Naive thymus-derived CD4-positive, alpha-beta T cell (primary cell): ENCODE measurements at regions of chr2 and their contacts with region 1.

Region 1: DNA sequence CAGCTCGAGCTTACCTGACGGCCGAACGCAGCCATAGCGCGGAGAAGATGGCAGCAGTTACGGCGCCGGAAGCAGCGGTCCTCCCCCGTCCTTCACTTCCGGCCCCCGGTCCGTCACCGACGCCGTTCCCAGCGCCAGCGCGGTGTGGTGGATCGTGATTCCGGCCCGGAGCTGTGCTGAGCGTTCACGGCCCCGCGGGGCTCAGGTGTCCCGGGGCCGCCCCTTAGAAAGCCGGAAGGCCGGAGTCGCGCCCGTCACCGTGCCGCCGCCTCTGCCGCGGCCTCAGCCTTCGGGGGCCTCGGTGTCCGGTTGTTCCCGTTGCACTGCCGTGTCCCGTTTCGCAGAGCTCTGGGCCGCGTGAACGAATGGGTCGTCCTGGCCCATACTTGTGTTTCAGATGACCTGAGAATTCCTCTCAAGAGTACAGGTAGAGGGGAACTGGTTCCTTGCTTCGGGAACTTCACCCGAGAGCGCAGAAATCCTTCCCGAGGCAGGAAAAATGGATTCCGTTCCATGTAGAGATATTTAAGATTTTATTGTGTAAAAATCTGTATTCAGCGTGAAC is at the start of gene MTERF4:
- DNase-seq: peak; percentile 80 to 91 (median 86)
- ATAC-seq: peak; percentile 98
- H3K4me3 ChIP-seq: peak within 1 kb of the TSS; percentile 89
- H3K4me3 Mint-ChIP-seq: peak within 1 kb of the TSS; percentile 86 to 99 (median 96)
- H3K27ac ChIP-seq: peak within 1 kb of the TSS; percentile 92
- H3K27ac Mint-ChIP-seq: peak within 1 kb of the TSS; percentile 96 to 99 (median 99)
- H3K4me1 ChIP-seq: peaks cover 29 to 55% of the 10 kb centered on the region in 2 donors
- H3K4me1 Mint-ChIP-seq: peaks cover 27 to 84% (median 64%) of the 10 kb centered on the region in 7 donors
- H3K27me3 ChIP-seq: no peaks in the 10 kb centered on the region
- H3K27me3 Mint-ChIP-seq: no peaks in the 10 kb centered on the region
- total RNA-seq, gene MTERF4: 45.3 to 214 (median 91.8) TPM

Region 2: DNA sequence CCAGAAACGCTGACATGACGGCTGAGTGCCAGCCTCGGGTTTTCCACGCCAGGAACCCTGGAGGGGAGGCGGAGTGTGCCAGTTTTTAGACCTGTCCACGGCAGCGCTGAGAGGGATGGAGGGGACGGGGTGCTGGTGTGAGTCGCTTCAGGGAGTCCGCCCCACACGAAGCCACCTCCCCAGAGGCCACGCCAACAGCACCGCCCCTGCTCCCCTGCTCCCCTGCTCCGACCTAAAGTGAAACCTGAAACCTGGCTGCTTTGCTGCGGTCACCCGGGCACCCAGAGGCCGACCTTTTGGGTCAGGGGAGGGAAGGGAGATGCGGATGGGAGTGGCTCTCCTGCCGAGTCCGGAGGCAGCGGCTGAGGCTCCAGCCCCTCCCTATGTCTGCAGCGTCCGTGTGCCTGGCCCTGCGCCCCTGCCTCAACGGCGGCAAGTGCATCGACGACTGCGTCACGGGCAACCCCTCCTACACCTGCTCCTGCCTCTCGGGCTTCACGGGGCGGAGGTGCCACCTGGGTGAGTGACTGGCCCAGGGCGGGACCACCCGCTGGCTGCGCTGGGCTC is 65.8 kb before region 1 on chr2:
- CTCF ChIA-PET with region 1: no interaction called
- POLR2A ChIA-PET with region 1: no interaction called
- intact Hi-C with region 1: loop called in 1 of 2 experiments (anchors 2 kb)
- DNase-seq: peak; percentile 31 to 83 (median 58)
- ATAC-seq: peak; percentile 72
- H3K4me3 ChIP-seq: peak overlapping the region; percentile 79
- H3K4me3 Mint-ChIP-seq: peak overlapping the region; percentile 60 to 88 (median 80)
- H3K27ac ChIP-seq: peak overlapping the region; percentile 66
- H3K27ac Mint-ChIP-seq: peak overlapping the region in 6 of 9 donors; percentile 49 to 91 (median 80)
- H3K4me1 ChIP-seq: peaks cover 7 to 10% of the 10 kb centered on the region in 2 donors
- H3K4me1 Mint-ChIP-seq: peaks cover 0 to 24% (median 6%) of the 10 kb centered on the region in 7 donors
- H3K27me3 ChIP-seq: no peaks in the 10 kb centered on the region
- H3K27me3 Mint-ChIP-seq: no peaks in the 10 kb centered on the region

Region 3: DNA sequence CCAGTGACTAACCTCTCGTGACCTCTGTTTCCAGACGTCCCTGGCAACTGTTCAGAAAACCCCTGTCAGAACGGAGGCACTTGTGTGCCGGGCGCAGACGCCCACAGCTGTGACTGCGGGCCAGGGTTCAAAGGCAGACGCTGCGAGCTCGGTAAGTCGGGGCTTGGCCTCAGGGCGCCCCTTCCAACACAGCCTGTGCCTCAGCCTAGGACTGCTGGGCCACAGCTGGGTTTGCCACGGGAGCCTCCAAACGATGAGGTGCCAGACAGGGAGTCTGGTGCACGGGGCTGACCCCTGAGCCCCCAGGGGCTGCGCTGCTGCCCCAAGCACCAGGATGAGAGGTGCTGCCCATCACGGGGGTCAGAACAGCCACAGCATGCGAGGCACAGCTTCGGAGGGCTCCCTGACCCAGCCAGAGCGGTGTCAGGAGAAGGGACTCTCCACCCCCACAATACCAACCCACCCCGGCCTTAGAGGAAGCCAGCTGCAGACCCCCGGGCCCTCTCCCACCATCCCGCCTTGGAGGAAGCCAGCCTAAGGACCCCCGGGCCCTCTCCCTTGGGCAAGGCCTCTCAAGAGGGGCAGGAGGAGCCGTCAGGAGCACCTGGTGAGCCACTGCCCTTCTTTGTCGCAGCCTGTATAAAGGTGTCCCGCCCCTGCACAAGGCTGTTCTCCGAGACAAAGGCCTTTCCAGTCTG is 20.5 kb before region 1 on chr2:
- CTCF ChIA-PET with region 1: interaction called, 7 read pairs
- POLR2A ChIA-PET with region 1: interaction called, 4 read pairs
- intact Hi-C with region 1: loop called in 1 of 2 experiments (anchors 2 kb)
- DNase-seq: no peak
- ATAC-seq: no peak
- H3K4me3 ChIP-seq: no peak overlapping the region
- H3K4me3 Mint-ChIP-seq: no peak overlapping the region
- H3K27ac ChIP-seq: no peak overlapping the region
- H3K27ac Mint-ChIP-seq: peak overlapping the region in 7 of 9 donors; percentile 65 to 89 (median 80)
- H3K4me1 ChIP-seq: no peaks in the 10 kb centered on the region
- H3K4me1 Mint-ChIP-seq: peaks cover 0 to 36% (median 28%) of the 10 kb centered on the region in 7 donors
- H3K27me3 ChIP-seq: no peaks in the 10 kb centered on the region
- H3K27me3 Mint-ChIP-seq: no peaks in the 10 kb centered on the region

Region 4: GRCh38 chr2:241118737-241119505 is 16.6 kb after region 1 on chr2:
- CTCF ChIA-PET with region 1: no interaction called
- POLR2A ChIA-PET with region 1: interaction called, 68 read pairs
- intact Hi-C with region 1: loop called in 1 of 2 experiments (anchors 2 kb)
- DNase-seq: no peak
- ATAC-seq: no peak
- H3K4me3 ChIP-seq: no peak overlapping the region
- H3K4me3 Mint-ChIP-seq: no peak overlapping the region
- H3K27ac ChIP-seq: no peak overlapping the region
- H3K27ac Mint-ChIP-seq: no peak overlapping the region
- H3K4me1 ChIP-seq: no peaks in the 10 kb centered on the region
- H3K4me1 Mint-ChIP-seq: peaks cover under 1 to 8% (median 4%) of the 10 kb centered on the region in 7 donors
- H3K27me3 ChIP-seq: no peaks in the 10 kb centered on the region
- H3K27me3 Mint-ChIP-seq: no peaks in the 10 kb centered on the region